Mammary epithelial cell (primary cell): ENCODE measurements at regions of chr14 and their contacts with region 1.

Region 1: DNA sequence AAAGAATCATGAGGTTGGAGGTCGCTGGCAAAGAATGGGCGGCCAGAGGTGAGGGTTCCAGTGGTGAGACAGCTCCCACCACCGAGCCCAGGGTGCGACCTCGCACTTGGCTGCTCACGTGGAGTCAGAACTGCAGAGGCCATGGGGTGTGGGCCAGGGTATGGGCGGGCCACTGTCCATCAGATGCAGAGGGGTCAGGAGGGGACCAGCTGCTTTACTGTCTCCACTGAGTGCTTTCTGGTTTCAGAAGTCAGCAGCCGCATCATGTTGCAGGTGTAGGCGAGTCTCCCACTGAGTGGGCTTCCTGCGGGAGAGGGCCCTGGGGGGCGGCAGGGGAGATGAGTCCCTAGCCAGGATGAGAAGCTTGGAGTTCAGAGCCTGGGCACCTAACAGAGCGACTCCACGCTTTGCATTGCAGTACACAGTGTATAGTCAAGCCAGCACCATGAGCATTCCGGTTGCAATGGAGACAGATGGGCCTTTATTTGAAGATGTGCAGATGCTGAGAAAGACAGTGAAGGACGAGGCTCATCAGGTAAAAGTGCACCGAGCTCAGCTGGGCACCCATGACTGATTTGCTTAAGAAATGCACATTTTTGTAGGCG is 46.9 kb upstream of the DYNC1H1 start:
- DNase-seq: no peak
- H3K4me3 ChIP-seq: no peak overlapping the region
- H3K27ac ChIP-seq: no peak overlapping the region
- H3K4me1 ChIP-seq: no peaks in the 10 kb centered on the region
- H3K27me3 ChIP-seq: no peaks in the 10 kb centered on the region
- CTCF ChIP-seq: no peak

Region 2: GRCh38 chr14:101865288-101865687 is 52.2 kb before region 1 on chr14:
- CTCF ChIA-PET with region 1: no interaction called
- dilution Hi-C with region 1: loop called (anchors 5 kb)
- in situ Hi-C with region 1: no loop called
- intact Hi-C with region 1: no loop called
- DNase-seq: no peak
- H3K4me3 ChIP-seq: no peak overlapping the region
- H3K27ac ChIP-seq: no peak overlapping the region
- H3K4me1 ChIP-seq: no peaks in the 10 kb centered on the region
- H3K27me3 ChIP-seq: no peaks in the 10 kb centered on the region
- CTCF ChIP-seq: no peak